Activated CD4-positive, alpha-beta memory T cell treated with anti-CD3 and anti-CD28 coated beads for 36 hours (primary cell): ENCODE measurements at regions of chr16 and their contacts with region 1.

Region 1: GRCh38 chr16:13919683-13920509 is at the start of gene ERCC4:
- DNase-seq: peak; percentile 99
- H3K4me3 Mint-ChIP-seq: peak within 1 kb of the TSS; percentile 92
- H3K27ac Mint-ChIP-seq: peak within 1 kb of the TSS; percentile 53
- H3K4me1 Mint-ChIP-seq: peaks cover 21% of the 10 kb centered on the region
- H3K27me3 Mint-ChIP-seq: no peaks in the 10 kb centered on the region
- total RNA-seq, gene ERCC4: 11.0 to 14.1 TPM

Region 2: GRCh38 chr16:13896543-13897183 is 23.2 kb before region 1 on chr16:
- CTCF ChIA-PET with region 1: interaction called, 11 read pairs
- POLR2A ChIA-PET with region 1: no interaction called
- intact Hi-C with region 1: no loop called
- DNase-seq: no peak
- H3K4me3 Mint-ChIP-seq: no peak overlapping the region
- H3K27ac Mint-ChIP-seq: no peak overlapping the region
- H3K4me1 Mint-ChIP-seq: no peaks in the 10 kb centered on the region
- H3K27me3 Mint-ChIP-seq: peaks cover 17% of the 10 kb centered on the region

Region 3: DNA sequence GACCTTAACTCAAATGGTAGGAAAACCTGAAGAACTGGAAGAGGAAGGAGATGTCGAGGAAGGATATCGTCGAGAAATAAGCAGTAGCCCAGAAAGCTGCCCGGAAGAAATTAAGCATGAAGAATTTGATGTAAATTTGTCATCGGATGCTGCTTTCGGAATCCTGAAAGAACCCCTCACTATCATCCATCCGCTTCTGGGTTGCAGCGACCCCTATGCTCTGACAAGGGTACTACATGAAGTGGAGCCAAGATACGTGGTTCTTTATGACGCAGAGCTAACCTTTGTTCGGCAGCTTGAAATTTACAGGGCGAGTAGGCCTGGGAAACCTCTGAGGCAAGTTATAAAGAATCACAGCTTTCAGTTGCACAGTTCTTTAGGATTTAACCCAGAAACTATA is 15.5 kb after region 1 on chr16:
- CTCF ChIA-PET with region 1: interaction called, 37 read pairs
- POLR2A ChIA-PET with region 1: no interaction called
- intact Hi-C with region 1: no loop called
- DNase-seq: peak; percentile 23
- H3K4me3 Mint-ChIP-seq: no peak overlapping the region
- H3K27ac Mint-ChIP-seq: no peak overlapping the region
- H3K4me1 Mint-ChIP-seq: peaks cover 15% of the 10 kb centered on the region
- H3K27me3 Mint-ChIP-seq: no peaks in the 10 kb centered on the region

Region 4: GRCh38 chr16:14070877-14071575 is 151.1 kb after region 1 on chr16 and contains the start of gene MRTFB:
- CTCF ChIA-PET with region 1: interaction called, 4 read pairs
- POLR2A ChIA-PET with region 1: no interaction called
- intact Hi-C with region 1: loop called (anchors 2 kb)
- DNase-seq: peak; percentile 82
- H3K4me3 Mint-ChIP-seq: peak within 1 kb of the TSS; percentile 83
- H3K27ac Mint-ChIP-seq: peak within 1 kb of the TSS; percentile 33
- H3K4me1 Mint-ChIP-seq: peaks cover 12% of the 10 kb centered on the region
- H3K27me3 Mint-ChIP-seq: no peaks in the 10 kb centered on the region
- total RNA-seq, gene MRTFB: 8.8 to 9.7 TPM

Region 5: GRCh38 chr16:14249291-14250032 is 329.6 kb after region 1 on chr16:
- CTCF ChIA-PET with region 1: interaction called, 24 read pairs
- POLR2A ChIA-PET with region 1: no interaction called
- intact Hi-C with region 1: loop called (anchors 5 kb)
- DNase-seq: peak; percentile 62
- H3K4me3 Mint-ChIP-seq: no peak overlapping the region
- H3K27ac Mint-ChIP-seq: no peak overlapping the region
- H3K4me1 Mint-ChIP-seq: peaks cover 3% of the 10 kb centered on the region
- H3K27me3 Mint-ChIP-seq: no peaks in the 10 kb centered on the region

Region 6: DNA sequence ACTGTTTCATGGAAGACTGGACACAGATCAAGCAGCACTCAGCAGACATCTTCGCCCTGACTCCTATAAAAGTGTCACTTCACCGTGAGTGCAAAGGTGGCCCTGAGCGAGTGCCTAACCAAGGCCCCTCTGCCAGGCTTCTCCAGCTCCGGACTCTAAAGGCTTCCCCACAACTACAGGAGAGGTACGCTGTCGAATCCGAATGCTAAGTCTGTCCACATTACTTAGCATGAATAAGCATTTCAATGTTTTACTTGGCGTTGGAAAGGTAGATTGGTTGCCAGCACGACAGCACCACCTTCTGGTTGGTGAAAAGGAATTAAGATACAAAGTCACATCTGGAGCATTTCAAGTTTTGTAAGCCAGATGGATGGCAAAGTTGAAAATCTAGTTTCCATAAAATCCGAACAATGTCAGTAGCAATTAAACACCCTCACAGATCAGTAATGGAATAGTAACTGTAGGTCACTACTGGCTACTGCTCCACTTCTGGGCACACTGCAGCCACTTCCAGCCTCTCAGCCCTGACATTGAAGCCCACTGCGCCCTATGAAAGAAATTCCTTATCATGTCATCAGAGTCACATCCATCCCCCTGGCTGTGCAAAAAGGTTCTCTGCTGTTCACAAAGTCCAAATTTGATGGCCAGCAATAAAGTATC is 609.2 kb after region 1 on chr16:
- CTCF ChIA-PET with region 1: interaction called, 10 read pairs
- POLR2A ChIA-PET with region 1: no interaction called
- intact Hi-C with region 1: loop called (anchors 1 kb)
- DNase-seq: peak; percentile 64
- H3K4me3 Mint-ChIP-seq: no peak overlapping the region
- H3K27ac Mint-ChIP-seq: no peak overlapping the region
- H3K4me1 Mint-ChIP-seq: no peaks in the 10 kb centered on the region
- H3K27me3 Mint-ChIP-seq: no peaks in the 10 kb centered on the region